Tibial artery (tissue), 4 donors: ENCODE measurements at regions of chr1 and their contacts with region 1.

Region 1: GRCh38 chr1:159780583-159781582 is at the start of gene DUSP23:
- DNase-seq: peak; percentile 96 to 99
- H3K4me3 ChIP-seq: peak within 1 kb of the TSS; percentile 82 to 87
- H3K27ac ChIP-seq: peak within 1 kb of the TSS; percentile 71 to 81
- H3K4me1 ChIP-seq: peaks cover 0 to 15% (median 10%) of the 10 kb centered on the region in 4 donors
- H3K27me3 ChIP-seq: no peaks in the 10 kb centered on the region
- CTCF ChIP-seq: peak; percentile 90 to 96

Region 2: GRCh38 chr1:159266832-159267231 is 514.1 kb before region 1 on chr1:
- intact Hi-C with region 1: no loop called
- DNase-seq: no peak
- H3K4me3 ChIP-seq: no peak overlapping the region
- H3K27ac ChIP-seq: no peak overlapping the region
- H3K4me1 ChIP-seq: no peaks in the 10 kb centered on the region
- H3K27me3 ChIP-seq: no peaks in the 10 kb centered on the region
- CTCF ChIP-seq: no peak

Region 3: GRCh38 chr1:159664247-159664646 is 116.6 kb before region 1 on chr1:
- intact Hi-C with region 1: no loop called
- DNase-seq: no peak
- H3K4me3 ChIP-seq: no peak overlapping the region
- H3K27ac ChIP-seq: no peak overlapping the region
- H3K4me1 ChIP-seq: no peaks in the 10 kb centered on the region
- H3K27me3 ChIP-seq: no peaks in the 10 kb centered on the region
- CTCF ChIP-seq: no peak

Region 4: DNA sequence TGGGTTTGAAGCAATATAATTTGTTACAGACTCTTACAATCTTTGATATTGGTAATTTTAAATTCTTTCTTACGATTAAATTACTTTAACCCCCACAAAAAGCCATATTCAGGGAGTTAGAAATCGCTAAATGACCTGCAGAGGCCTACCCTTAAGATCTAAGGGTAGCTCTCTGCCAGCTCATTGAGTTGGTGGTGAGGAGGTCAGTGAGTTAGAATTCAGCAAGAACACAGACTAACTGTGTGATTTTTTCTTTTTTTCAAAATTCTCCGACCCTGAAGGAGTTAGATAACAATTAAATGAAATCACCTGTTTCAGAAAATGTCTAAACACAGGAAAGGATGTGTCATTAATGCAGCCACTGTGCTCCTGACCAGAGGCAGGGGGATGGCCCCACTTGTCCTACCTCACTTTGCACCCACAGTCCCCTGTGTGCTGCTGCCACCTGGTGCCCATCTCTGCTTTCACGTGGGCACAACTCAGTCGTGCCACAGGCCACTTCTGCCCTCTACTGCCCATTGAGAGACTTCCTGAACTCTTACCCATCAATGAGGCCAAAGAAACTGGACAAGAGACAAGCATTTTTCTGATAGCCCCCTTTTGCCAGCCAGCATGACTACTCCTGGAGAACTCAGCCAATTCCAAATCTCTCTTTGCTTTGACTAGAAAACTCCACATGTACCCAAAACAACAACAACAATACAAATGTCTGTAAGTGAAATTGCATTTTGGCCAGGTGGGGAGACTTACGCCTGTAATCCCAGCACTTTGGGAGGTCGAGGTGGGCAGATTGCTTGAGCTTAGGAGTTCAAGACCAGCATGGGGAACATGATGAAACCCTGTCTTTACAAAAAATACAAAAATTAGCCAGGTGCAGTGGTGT is 110.6 kb after region 1 on chr1:
- intact Hi-C with region 1: loop called (anchors 5 kb)
- DNase-seq: peak; percentile 84 to 90
- H3K4me3 ChIP-seq: no peak overlapping the region
- H3K27ac ChIP-seq: no peak overlapping the region
- H3K4me1 ChIP-seq: peaks cover 0 to 11% (median 4%) of the 10 kb centered on the region in 4 donors
- H3K27me3 ChIP-seq: no peaks in the 10 kb centered on the region
- CTCF ChIP-seq: peak; percentile 96 to 98

Region 5: DNA sequence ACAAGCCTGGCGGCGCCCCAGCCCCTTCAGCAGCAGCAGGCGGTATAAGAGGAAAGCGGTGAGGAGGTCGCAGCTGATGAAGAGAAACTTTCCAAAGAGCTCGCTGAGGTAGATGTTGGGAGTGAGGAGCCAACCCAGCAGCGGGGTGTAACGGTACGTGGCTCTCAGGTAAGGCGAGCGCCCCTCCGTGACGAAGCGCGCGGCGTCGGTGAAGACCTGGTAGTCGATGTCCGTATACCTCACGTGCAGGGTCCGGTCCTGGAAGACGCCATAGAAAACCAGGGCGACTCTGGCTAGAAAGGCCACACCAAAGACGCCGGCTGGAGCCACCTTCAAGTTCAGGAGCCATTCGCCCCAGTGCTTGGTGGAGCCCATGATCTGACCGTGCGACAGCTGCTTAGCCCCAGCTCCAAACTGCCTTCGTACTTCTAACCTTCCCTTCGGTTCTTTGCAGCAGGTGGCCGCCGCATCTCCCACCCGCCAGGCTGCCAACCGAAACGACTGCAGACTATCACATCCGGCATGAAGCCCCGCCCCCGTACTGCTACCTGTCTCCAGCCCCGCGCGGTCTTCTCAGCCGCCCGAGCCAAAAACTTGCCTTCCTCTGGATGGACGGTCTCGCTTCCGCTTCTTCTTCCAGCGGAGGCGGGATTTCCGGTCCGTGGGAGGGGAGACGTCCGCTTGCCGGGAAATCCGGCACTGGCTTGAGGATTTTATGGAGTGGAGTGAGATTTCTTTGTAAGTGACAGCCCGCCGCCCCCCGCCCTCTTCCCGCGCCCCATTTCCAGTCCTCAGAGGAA is 250.7 kb after region 1 on chr1 and contains the start of gene PIGM:
- intact Hi-C with region 1: loop called (anchors 10 kb)
- DNase-seq: peak; percentile 93 to 95
- H3K4me3 ChIP-seq: peak within 1 kb of the TSS; percentile 77 to 81
- H3K27ac ChIP-seq: peak within 1 kb of the TSS; percentile 67 to 68
- H3K4me1 ChIP-seq: peaks cover 0 to 23% (median 19%) of the 10 kb centered on the region in 4 donors
- H3K27me3 ChIP-seq: no peaks in the 10 kb centered on the region
- CTCF ChIP-seq: no peak